CD4-positive, alpha-beta memory T cell (primary cell): ENCODE measurements at regions of chr2 and their contacts with region 1.

Region 1: GRCh38 chr2:119929537-119929936 is 83.3 kb upstream of the EPB41L5 start:
- DNase-seq: peak; percentile 50 to 67 (median 58)
- H3K4me3 ChIP-seq: peak overlapping the region; percentile 39 to 51
- H3K4me3 Mint-ChIP-seq: peak overlapping the region; percentile 68 to 91 (median 90)
- H3K27ac ChIP-seq: peak overlapping the region; percentile 61
- H3K27ac Mint-ChIP-seq: peak overlapping the region; percentile 82 to 98 (median 92)
- H3K4me1 ChIP-seq: peaks cover 79% of the 10 kb centered on the region
- H3K4me1 Mint-ChIP-seq: peaks cover 46 to 81% (median 58%) of the 10 kb centered on the region in 4 donors
- H3K27me3 ChIP-seq: no peaks in the 10 kb centered on the region
- H3K27me3 Mint-ChIP-seq: no peaks in the 10 kb centered on the region

Region 2: DNA sequence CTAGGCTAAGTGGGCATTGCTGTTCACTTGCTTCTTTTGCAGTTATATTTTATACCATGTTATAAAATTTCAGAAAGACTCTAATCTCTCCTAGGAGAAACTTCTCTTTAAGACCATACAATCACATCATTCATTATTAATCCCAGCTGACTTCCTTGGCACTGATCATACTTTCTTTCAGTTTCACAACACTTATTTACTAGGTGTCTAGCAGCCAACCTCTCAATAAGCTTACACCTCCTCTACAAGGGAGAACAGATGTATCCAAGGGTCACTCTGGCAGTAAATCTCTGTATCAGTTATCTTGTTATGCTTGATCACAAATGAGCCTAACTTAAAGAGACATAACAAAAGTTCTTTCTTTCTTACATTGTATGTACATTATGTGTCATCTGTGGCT is 13.5 kb after region 1 on chr2:
- CTCF ChIA-PET with region 1: interaction called, 12 read pairs
- POLR2A ChIA-PET with region 1: interaction called, 7 read pairs
- intact Hi-C with region 1: no loop called
- DNase-seq: no peak
- H3K4me3 ChIP-seq: no peak overlapping the region
- H3K4me3 Mint-ChIP-seq: peak overlapping the region in 1 of 8 donors; percentile 48
- H3K27ac ChIP-seq: no peak overlapping the region
- H3K27ac Mint-ChIP-seq: peak overlapping the region; percentile 18 to 73 (median 50)
- H3K4me1 ChIP-seq: peaks cover 38% of the 10 kb centered on the region
- H3K4me1 Mint-ChIP-seq: peaks cover 36 to 70% (median 43%) of the 10 kb centered on the region in 4 donors
- H3K27me3 ChIP-seq: no peaks in the 10 kb centered on the region
- H3K27me3 Mint-ChIP-seq: no peaks in the 10 kb centered on the region

Region 3: DNA sequence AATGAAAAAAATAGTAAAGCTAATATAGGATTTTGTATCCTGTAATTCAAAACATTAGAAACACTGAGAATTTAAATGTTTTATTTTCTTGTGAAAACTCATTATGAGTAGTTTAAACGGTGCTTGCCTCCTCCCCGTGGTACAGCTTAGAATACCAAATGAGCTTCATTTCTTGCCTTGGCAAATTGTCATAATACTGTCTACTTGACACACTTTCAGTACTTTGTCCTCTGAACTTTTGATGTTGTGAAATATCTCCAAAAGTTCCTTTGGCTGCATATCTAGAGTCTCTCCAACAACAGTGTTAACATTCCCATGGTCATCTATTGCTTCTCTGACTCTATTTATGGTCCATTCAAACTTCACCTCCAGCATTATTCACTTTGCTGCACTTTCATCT is 21.4 kb after region 1 on chr2:
- CTCF ChIA-PET with region 1: no interaction called
- POLR2A ChIA-PET with region 1: no interaction called
- intact Hi-C with region 1: loop called (anchors 2 kb)
- DNase-seq: no peak
- H3K4me3 ChIP-seq: no peak overlapping the region
- H3K4me3 Mint-ChIP-seq: peak overlapping the region in 1 of 8 donors; percentile 10
- H3K27ac ChIP-seq: no peak overlapping the region
- H3K27ac Mint-ChIP-seq: peak overlapping the region in 4 of 7 donors; percentile 3 to 74 (median 54)
- H3K4me1 ChIP-seq: no peaks in the 10 kb centered on the region
- H3K4me1 Mint-ChIP-seq: peaks cover 17 to 56% (median 29%) of the 10 kb centered on the region in 4 donors
- H3K27me3 ChIP-seq: no peaks in the 10 kb centered on the region
- H3K27me3 Mint-ChIP-seq: no peaks in the 10 kb centered on the region